T-cell (primary cell): ENCODE measurements at regions of chr12 and their contacts with region 1.

Region 1: DNA sequence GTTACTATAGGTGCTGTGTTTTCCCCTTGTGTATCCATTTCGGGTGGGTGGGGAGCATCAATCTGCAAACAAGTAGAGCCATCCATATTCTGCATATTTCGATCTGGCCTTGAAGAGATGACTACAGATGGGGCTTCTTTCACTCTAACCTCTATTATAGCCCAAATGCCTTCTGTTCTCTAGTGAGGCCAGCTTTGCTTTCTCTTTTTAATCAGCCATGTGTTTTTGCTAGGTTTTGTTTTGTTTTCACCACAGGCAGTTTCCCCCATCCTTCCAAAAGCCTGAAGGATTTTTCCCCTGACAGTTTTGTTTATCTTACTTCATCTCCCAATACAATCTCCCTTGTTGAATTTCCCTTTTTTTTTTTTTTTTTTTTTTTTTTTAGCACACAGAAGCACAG is 224.1 kb downstream of the BTG1 start:
- DNase-seq: no peak
- ATAC-seq: no peak
- H3K4me3 ChIP-seq: no peak overlapping the region
- H3K4me3 Mint-ChIP-seq: no peak overlapping the region
- H3K27ac ChIP-seq: no peak overlapping the region
- H3K27ac Mint-ChIP-seq: peak overlapping the region in 1 of 2 donors; percentile 12
- H3K4me1 ChIP-seq: peaks cover 0 to 4% of the 10 kb centered on the region in 2 experiments
- H3K4me1 Mint-ChIP-seq: peaks cover 33 to 37% (median 35%) of the 10 kb centered on the region in 3 donors
- H3K27me3 ChIP-seq: no peaks in the 10 kb centered on the region
- H3K27me3 Mint-ChIP-seq: no peaks in the 10 kb centered on the region

Region 2: GRCh38 chr12:91616416-91616815 is 305.1 kb before region 1 on chr12:
- CTCF ChIA-PET with region 1: interaction called in 1 of 2 experiments, 22 read pairs
- POLR2A ChIA-PET with region 1: no interaction called
- DNase-seq: no peak
- ATAC-seq: no peak
- H3K4me3 ChIP-seq: no peak overlapping the region
- H3K4me3 Mint-ChIP-seq: no peak overlapping the region
- H3K27ac ChIP-seq: no peak overlapping the region
- H3K27ac Mint-ChIP-seq: no peak overlapping the region
- H3K4me1 ChIP-seq: no peaks in the 10 kb centered on the region
- H3K4me1 Mint-ChIP-seq: peaks cover 0 to 6% (median 1%) of the 10 kb centered on the region in 3 donors
- H3K27me3 ChIP-seq: no peaks in the 10 kb centered on the region
- H3K27me3 Mint-ChIP-seq: no peaks in the 10 kb centered on the region